ENCODE measurements at regions of chr17 and their contacts with region 1.

Region 1: DNA sequence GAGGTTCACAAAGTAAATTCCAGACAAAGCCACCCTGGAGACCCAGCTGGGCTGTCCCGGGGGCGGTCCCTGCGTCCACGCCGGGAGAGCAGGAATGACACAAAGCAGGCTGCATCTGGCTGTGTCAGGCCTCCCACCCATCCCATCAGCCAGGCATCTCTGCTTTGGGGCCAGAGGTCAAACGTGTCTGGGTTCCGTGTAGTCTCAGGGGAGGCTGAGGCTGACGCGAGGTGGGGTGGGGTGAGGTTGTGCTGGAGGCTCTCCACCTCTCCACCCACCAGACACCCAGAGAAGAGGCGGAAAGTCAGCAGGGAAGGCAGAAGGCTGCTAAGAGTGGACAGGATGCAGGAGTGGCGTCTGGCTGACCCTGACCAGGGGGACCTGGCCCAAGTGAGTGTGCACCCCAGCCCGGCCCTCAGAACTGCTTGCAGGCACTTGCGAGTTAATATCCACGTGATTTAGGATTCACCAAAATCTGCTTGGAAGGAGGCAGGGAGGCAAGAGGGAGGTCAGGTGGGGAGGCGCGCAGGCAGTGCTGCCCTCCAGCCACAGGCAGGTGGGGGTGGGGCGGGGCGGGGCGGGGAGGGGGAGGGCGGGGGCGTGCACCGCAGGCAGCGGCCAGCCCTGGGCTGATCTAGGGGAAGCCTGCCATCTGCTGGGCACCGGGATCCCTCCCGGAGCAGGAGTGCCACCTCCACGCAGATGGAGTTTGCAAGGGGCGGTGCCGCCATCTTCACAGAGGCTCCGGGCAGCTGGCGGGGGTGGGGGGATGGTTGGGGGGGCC is 44.3 kb downstream of the TBC1D16 start:
- DNase-seq: peak; percentile 91
- H3K4me3 ChIP-seq: peak overlapping the region; percentile 33 to 56 (median 38)
- H3K27ac ChIP-seq: peak overlapping the region in 3 of 4 donors; percentile 12 to 71 (median 34)
- H3K4me1 ChIP-seq: peaks cover 3 to 65% (median 56%) of the 10 kb centered on the region in 4 donors
- H3K27me3 ChIP-seq: no peaks in the 10 kb centered on the region
- CTCF ChIP-seq: peak in 1 of 4 experiments; percentile 73
- EP300 ChIP-seq: no peak
- POLR2A ChIP-seq: no peak

Region 2: DNA sequence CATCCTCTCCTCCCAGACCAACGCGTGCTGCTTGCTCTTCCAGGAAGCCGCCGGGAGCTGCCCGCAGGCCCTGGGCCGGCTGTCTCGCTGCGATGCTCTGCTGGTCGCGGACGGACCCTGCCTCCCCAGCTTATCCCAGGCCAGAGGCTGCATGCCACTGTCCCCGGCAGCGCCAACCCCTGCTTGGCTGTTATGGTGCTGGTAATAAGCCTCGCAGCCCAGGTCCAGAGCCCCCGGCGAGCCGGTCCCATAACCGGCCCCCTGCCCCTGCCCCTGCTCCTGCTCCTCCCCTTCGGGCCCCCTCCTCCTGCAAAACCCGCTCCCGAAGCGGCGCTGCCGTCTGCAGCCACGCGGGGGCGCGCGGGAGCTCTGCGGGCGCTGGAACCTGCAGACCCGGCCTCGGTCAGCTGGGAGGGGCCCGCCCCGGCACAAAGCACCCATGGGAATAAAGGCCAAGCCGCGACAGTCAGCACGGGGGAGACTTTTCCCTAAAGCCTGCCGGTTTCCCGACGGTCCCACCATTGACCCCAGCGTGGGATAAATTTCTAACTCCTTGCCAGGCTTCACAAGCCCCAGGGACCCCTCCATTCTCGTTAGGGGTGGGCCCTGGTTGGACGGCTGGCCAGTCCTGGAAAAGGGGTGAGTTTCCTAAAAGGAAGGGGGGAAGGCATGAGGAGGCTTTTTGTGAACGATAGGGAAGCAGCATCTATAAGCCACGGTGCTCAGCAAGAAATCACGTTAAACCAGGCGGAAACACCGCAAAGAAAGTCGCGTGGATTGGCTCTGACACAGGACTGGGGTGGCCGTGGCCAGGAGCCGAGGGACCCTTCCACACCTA is 249.4 kb before region 1 on chr17:
- intact Hi-C with region 1: loop called (anchors 2 kb)
- DNase-seq: peak; percentile 73
- H3K4me3 ChIP-seq: no peak overlapping the region
- H3K27ac ChIP-seq: no peak overlapping the region
- H3K4me1 ChIP-seq: peaks cover 0 to 9% (median 8%) of the 10 kb centered on the region in 4 donors
- H3K27me3 ChIP-seq: peaks cover 13 to 81% (median 37%) of the 10 kb centered on the region in 3 donors
- CTCF ChIP-seq: peak; percentile 56 to 97 (median 80)
- EP300 ChIP-seq: no peak
- POLR2A ChIP-seq: no peak

Region 3: DNA sequence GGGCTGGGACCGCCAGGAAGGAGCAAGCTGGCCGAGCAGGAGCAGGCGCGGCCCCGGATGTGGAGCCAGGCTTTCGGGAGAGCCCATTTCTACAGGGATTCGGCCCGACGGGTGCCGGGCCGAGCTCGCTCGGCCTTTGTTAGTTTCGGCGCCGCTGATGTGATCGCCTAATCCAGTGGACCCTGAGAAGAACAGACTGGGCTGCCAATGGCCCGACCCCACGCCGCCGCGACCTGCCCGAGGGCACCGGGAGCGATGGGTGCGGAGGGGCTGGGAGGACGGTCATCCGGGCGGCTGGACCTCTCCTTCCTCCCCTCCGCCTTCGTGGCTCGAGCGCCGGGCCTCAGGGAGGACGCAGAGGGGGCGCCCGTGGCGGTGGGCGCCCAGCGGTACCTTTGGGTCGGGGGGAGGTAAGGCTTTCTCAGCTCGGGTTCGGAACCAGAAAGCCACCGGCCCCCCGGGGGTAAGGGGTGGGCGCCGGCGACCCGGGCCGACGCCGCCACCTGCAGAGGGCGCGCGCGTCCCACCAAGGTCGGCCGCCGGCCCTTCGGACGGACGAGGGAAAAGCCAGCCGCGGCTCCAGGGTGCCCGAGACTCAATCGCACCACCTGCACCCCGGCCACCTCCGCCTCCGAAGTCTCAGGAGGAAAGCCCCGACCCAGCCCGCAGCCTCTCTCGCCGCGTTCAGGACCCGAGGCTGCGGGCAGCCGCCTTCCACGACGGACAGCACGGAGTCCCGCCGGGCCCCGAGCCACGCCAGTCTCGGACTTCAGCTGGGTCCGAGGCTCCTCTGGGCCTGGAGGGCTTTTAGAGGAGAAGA is 201.6 kb before region 1 on chr17:
- intact Hi-C with region 1: loop called (anchors 2 kb)
- DNase-seq: no peak
- H3K4me3 ChIP-seq: peak overlapping the region in 1 of 4 donors; percentile 1
- H3K27ac ChIP-seq: no peak overlapping the region
- H3K4me1 ChIP-seq: peaks cover 0 to 48% (median 35%) of the 10 kb centered on the region in 4 donors
- H3K27me3 ChIP-seq: peaks cover 57 to 100% (median 99%) of the 10 kb centered on the region in 3 donors
- CTCF ChIP-seq: peak; percentile 37 to 86 (median 63)
- EP300 ChIP-seq: no peak
- POLR2A ChIP-seq: no peak

Region 4: GRCh38 chr17:79844869-79845600 is 146.3 kb before region 1 on chr17:
- intact Hi-C with region 1: loop called (anchors 2 kb)
- DNase-seq: peak; percentile 75
- H3K4me3 ChIP-seq: peak overlapping the region; percentile 22 to 64 (median 54)
- H3K27ac ChIP-seq: peak overlapping the region; percentile 47 to 60 (median 57)
- H3K4me1 ChIP-seq: peaks cover 0 to 56% (median 52%) of the 10 kb centered on the region in 4 donors
- H3K27me3 ChIP-seq: peaks cover 35 to 56% (median 38%) of the 10 kb centered on the region in 3 donors
- CTCF ChIP-seq: peak in 3 of 4 experiments; percentile 29 to 86 (median 39)
- EP300 ChIP-seq: no peak
- POLR2A ChIP-seq: no peak

Region 5: DNA sequence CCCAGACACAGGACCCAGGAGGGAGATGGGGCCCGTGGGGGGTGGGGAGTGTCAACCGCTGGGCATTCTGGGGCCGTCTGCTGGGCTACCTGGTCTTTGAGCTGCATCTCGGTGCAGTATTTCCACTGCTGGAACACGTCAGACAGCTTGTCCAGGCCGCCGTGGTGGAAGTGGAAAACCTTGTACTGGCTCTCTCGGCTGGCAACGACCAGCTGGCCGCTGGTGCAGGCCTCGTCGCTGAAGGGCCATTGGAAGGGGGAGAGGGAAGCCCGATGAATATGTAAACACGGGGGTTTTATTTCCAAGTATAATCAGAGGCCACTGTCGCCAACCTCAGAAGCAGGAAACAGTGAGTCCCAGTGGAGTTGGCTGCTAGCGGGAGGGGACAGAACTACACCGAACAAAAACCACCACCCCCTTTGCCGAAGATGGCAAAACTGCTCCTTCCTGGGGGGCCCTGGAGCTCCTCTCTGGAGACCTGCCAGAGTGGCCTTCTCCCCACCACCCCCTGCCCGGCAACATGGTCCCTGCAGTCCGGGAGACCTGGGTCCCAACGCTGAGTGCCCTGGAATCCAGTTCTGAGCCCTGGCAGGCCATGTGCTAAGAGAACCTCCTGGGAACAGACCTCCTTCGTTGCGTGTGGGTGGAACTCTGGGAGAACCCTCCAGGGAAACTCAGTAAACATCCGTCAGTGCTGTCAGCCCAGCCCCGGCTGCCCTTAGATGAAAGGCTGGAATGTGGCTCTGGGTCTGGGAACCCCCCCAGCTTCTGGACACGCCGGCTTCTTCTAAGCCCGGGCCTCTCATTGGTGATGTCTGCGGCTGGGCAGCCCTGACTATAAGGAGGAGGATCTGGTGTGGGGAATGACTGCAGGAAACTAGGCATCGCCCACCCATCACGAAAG is 39.7 kb before region 1 on chr17:
- intact Hi-C with region 1: loop called (anchors 2 kb)
- DNase-seq: peak; percentile 75
- H3K4me3 ChIP-seq: no peak overlapping the region
- H3K27ac ChIP-seq: peak overlapping the region; percentile 41 to 70 (median 59)
- H3K4me1 ChIP-seq: peaks cover 0 to 24% (median 20%) of the 10 kb centered on the region in 4 donors
- H3K27me3 ChIP-seq: no peaks in the 10 kb centered on the region
- CTCF ChIP-seq: no peak
- EP300 ChIP-seq: no peak
- POLR2A ChIP-seq: no peak

Region 6: DNA sequence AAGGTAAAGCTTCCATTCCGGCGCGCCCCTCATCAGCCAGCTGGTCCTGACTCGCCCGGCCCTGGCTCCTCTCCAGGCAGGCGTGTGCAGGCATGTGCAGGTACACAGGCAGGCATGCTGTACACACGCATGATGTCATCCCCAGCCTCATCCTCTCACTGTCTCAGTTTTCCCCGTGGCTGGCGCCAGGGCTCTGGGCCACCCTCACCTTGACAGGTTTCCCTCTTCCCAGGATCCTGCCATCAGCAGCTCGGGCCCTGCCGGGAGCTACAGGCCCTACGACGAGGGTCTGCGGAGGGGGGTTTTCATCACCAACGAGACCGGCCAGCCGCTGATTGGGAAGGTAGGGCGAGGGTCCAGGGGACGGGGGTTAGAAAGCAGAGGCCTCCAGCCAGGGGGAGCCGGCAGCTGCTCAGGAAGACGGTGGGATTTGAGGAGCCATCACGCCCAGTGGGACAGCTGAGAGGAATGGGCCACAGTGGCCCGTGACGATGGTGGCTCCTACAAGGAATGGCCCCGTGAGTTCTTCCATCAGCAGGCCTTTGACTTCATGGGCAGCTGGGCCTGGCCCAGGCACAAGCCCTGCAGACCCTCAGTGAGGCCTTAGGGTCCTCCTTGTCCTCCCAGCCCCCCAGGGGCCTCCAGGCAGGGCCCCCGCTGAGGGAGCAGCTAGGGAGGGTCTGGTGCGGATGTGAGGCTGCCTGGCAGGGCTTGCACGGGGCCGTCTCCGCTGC is 118.5 kb after region 1 on chr17:
- intact Hi-C with region 1: no loop called
- DNase-seq: no peak
- H3K4me3 ChIP-seq: no peak overlapping the region
- H3K27ac ChIP-seq: no peak overlapping the region
- H3K4me1 ChIP-seq: no peaks in the 10 kb centered on the region
- H3K27me3 ChIP-seq: no peaks in the 10 kb centered on the region
- CTCF ChIP-seq: no peak
- EP300 ChIP-seq: no peak
- POLR2A ChIP-seq: no peak